Naive thymus-derived CD4-positive, alpha-beta T cell (primary cell): ENCODE measurements at regions of chr3 and their contacts with region 1.

Region 1: GRCh38 chr3:187738331-187739093 is 6.8 kb downstream of the BCL6 start:
- DNase-seq: peak in 8 of 9 donors; percentile 39 to 70 (median 66)
- ATAC-seq: peak; percentile 60
- H3K4me3 ChIP-seq: peak overlapping the region; percentile 79
- H3K4me3 Mint-ChIP-seq: peak overlapping the region; percentile 86 to 100 (median 98)
- H3K27ac ChIP-seq: peak overlapping the region; percentile 72
- H3K27ac Mint-ChIP-seq: peak overlapping the region; percentile 83 to 100 (median 100)
- H3K4me1 ChIP-seq: peaks cover 12 to 23% of the 10 kb centered on the region in 2 donors
- H3K4me1 Mint-ChIP-seq: peaks cover 27 to 63% (median 43%) of the 10 kb centered on the region in 7 donors
- H3K27me3 ChIP-seq: no peaks in the 10 kb centered on the region
- H3K27me3 Mint-ChIP-seq: peaks cover 0 to 3% (median 0%) of the 10 kb centered on the region in 5 donors

Region 2: DNA sequence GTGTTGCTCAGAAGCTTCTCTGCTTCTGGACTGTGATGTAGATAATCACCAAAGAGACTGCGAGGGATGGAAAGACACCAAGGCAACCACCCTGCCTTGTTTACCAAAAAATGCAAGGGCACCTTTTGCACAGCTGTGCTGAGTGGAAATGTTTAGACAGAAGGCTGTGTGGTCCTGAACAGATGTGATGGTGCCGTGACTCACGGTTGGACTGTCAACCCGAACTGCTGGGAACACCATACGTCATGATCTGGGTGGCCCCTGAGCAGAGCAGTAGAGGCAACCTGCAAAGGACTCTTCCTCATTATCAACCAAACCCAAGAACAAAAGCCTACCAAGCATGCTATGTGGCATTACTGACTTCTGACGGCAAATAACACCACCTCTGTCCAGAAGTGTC is 354.1 kb after region 1 on chr3:
- CTCF ChIA-PET with region 1: no interaction called
- POLR2A ChIA-PET with region 1: no interaction called
- intact Hi-C with region 1: no loop called
- DNase-seq: peak in 1 of 9 donors; percentile 31
- ATAC-seq: no peak
- H3K4me3 ChIP-seq: no peak overlapping the region
- H3K4me3 Mint-ChIP-seq: no peak overlapping the region
- H3K27ac ChIP-seq: no peak overlapping the region
- H3K27ac Mint-ChIP-seq: no peak overlapping the region
- H3K4me1 ChIP-seq: no peaks in the 10 kb centered on the region
- H3K4me1 Mint-ChIP-seq: peaks cover 0 to 9% (median 0%) of the 10 kb centered on the region in 7 donors
- H3K27me3 ChIP-seq: no peaks in the 10 kb centered on the region
- H3K27me3 Mint-ChIP-seq: no peaks in the 10 kb centered on the region

Region 3: GRCh38 chr3:188279502-188280335 is 541.2 kb after region 1 on chr3:
- CTCF ChIA-PET with region 1: interaction called, 8 read pairs
- POLR2A ChIA-PET with region 1: no interaction called
- intact Hi-C with region 1: loop called (anchors 1 kb)
- DNase-seq: no peak
- ATAC-seq: no peak
- H3K4me3 ChIP-seq: no peak overlapping the region
- H3K4me3 Mint-ChIP-seq: no peak overlapping the region
- H3K27ac ChIP-seq: no peak overlapping the region
- H3K27ac Mint-ChIP-seq: peak overlapping the region in 1 of 9 donors; percentile 17
- H3K4me1 ChIP-seq: peaks cover 7% of the 10 kb centered on the region in 2 donors
- H3K4me1 Mint-ChIP-seq: peaks cover 14 to 36% (median 23%) of the 10 kb centered on the region in 7 donors
- H3K27me3 ChIP-seq: no peaks in the 10 kb centered on the region
- H3K27me3 Mint-ChIP-seq: no peaks in the 10 kb centered on the region

Region 4: GRCh38 chr3:188400494-188401243 is 662.2 kb after region 1 on chr3:
- CTCF ChIA-PET with region 1: interaction called, 3 read pairs
- POLR2A ChIA-PET with region 1: no interaction called
- intact Hi-C with region 1: loop called (anchors 1 kb)
- DNase-seq: no peak
- ATAC-seq: peak; percentile 75
- H3K4me3 ChIP-seq: no peak overlapping the region
- H3K4me3 Mint-ChIP-seq: peak overlapping the region in 1 of 10 donors; percentile 42
- H3K27ac ChIP-seq: no peak overlapping the region
- H3K27ac Mint-ChIP-seq: peak overlapping the region in 2 of 9 donors; percentile 58 to 69
- H3K4me1 ChIP-seq: peaks cover 0 to 4% of the 10 kb centered on the region in 2 donors
- H3K4me1 Mint-ChIP-seq: peaks cover 28 to 63% (median 49%) of the 10 kb centered on the region in 7 donors
- H3K27me3 ChIP-seq: no peaks in the 10 kb centered on the region
- H3K27me3 Mint-ChIP-seq: no peaks in the 10 kb centered on the region

Region 5: DNA sequence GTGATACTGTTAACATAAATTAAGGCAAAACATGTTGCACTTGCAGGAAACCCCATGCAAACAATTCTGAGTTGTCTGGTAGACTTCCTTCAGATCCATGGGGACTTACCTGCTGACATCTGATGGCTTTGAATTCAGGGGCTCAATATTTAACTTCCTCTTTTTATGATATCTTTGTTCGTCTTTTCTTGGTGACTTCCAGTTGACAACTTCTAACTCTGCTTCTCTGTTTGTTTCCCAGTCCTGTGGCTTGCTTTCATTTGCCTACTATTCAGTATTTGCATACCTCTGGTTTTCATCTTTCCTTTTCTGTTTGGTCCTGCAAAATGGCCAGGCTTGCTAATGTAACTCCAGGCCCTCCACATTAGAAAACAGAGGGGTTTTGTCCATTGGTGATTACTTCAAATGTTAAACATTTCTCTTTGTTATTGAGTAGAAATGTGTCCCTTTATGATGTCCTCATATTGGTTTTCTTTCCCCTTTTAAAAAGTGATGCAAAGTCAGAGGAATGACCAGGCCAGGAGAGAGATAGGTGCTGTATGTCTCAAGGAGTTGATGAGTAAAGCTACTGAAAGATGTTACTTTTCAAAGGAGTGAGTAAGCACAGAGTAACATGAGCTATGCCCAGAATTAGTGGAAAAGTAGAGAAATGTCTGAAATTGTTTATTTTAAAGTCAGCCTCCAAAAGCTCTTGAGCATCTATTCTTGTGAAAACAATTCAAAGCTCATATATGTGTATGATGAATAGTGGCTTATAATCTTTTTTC is 751.3 kb after region 1 on chr3:
- CTCF ChIA-PET with region 1: no interaction called
- POLR2A ChIA-PET with region 1: no interaction called
- intact Hi-C with region 1: no loop called
- DNase-seq: no peak
- ATAC-seq: no peak
- H3K4me3 ChIP-seq: no peak overlapping the region
- H3K4me3 Mint-ChIP-seq: no peak overlapping the region
- H3K27ac ChIP-seq: no peak overlapping the region
- H3K27ac Mint-ChIP-seq: peak overlapping the region in 1 of 9 donors; percentile 12
- H3K4me1 ChIP-seq: no peaks in the 10 kb centered on the region
- H3K4me1 Mint-ChIP-seq: peaks cover 0 to 5% (median 0%) of the 10 kb centered on the region in 7 donors
- H3K27me3 ChIP-seq: no peaks in the 10 kb centered on the region
- H3K27me3 Mint-ChIP-seq: no peaks in the 10 kb centered on the region

Region 6: DNA sequence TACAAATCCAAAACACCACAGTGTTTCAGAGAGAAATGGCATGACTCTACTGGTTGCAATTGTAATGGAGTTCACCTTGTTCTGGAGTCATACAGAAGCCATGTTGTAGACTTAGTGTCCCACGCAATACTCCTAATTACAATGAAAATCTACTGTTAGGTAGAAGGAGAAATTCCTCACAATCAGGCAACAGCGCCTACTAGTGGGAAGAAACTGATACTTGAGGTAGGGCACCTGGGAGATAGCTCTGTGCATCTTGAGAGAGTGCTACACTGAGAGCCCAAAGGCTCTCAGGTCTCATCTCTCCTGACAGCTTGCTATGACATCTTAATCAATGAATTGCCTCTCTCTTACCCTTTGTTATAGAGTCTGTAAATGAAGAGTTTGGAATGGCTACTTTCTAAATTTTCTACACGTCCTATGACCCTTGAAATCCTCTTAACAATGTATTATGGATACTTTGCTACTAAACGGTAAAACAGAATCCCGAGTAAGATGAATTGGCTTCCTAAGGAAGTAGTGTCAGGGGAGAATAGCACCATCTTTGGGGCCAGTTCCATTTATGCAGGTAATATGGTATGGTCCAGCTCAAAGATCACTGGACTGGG is 1010.6 kb after region 1 on chr3:
- CTCF ChIA-PET with region 1: interaction called, 52 read pairs
- POLR2A ChIA-PET with region 1: no interaction called
- intact Hi-C with region 1: loop called (anchors 1 kb)
- DNase-seq: peak in 8 of 9 donors; percentile 25 to 62 (median 46)
- ATAC-seq: peak; percentile 82
- H3K4me3 ChIP-seq: no peak overlapping the region
- H3K4me3 Mint-ChIP-seq: no peak overlapping the region
- H3K27ac ChIP-seq: no peak overlapping the region
- H3K27ac Mint-ChIP-seq: no peak overlapping the region
- H3K4me1 ChIP-seq: no peaks in the 10 kb centered on the region
- H3K4me1 Mint-ChIP-seq: peaks cover 0 to 17% (median 0%) of the 10 kb centered on the region in 7 donors
- H3K27me3 ChIP-seq: no peaks in the 10 kb centered on the region
- H3K27me3 Mint-ChIP-seq: no peaks in the 10 kb centered on the region

Region 7: DNA sequence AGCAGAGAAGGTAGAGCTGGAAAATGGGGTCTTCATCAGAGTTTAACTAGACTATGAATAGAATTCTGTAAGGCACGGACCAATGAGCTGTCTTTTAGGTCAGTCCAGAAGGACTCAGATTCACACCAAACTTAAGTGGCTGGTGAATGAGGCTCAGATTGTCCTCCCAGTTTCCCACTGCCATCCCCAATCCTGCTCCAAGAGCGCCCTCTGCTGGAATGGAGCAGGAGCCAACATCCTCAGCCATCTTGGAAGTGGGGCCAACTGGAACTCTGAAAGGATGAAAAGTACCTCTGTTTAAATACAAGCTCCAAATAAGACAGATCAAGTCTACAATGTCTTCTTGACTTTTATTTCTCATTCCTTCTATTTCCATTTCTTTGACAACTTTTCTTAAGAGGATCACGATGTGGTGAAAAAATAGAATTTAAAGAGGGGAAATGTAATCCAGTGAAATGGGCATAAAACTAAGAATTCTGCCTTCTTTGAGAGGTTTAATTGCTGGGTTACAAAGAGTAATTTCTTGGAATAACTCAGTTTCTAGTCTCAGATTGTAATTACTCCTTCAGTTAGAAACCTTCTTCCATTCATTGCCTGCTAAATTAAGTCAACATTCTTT is 1216.2 kb after region 1 on chr3:
- CTCF ChIA-PET with region 1: interaction called, 322 read pairs
- POLR2A ChIA-PET with region 1: interaction called, 33 read pairs
- intact Hi-C with region 1: loop called (anchors 1 kb)
- DNase-seq: peak; percentile 35 to 80 (median 63)
- ATAC-seq: peak; percentile 83
- H3K4me3 ChIP-seq: no peak overlapping the region
- H3K4me3 Mint-ChIP-seq: no peak overlapping the region
- H3K27ac ChIP-seq: no peak overlapping the region
- H3K27ac Mint-ChIP-seq: no peak overlapping the region
- H3K4me1 ChIP-seq: no peaks in the 10 kb centered on the region
- H3K4me1 Mint-ChIP-seq: peaks cover 0 to 30% (median 0%) of the 10 kb centered on the region in 7 donors
- H3K27me3 ChIP-seq: no peaks in the 10 kb centered on the region
- H3K27me3 Mint-ChIP-seq: peaks cover 0 to 5% (median 0%) of the 10 kb centered on the region in 5 donors

Region 8: DNA sequence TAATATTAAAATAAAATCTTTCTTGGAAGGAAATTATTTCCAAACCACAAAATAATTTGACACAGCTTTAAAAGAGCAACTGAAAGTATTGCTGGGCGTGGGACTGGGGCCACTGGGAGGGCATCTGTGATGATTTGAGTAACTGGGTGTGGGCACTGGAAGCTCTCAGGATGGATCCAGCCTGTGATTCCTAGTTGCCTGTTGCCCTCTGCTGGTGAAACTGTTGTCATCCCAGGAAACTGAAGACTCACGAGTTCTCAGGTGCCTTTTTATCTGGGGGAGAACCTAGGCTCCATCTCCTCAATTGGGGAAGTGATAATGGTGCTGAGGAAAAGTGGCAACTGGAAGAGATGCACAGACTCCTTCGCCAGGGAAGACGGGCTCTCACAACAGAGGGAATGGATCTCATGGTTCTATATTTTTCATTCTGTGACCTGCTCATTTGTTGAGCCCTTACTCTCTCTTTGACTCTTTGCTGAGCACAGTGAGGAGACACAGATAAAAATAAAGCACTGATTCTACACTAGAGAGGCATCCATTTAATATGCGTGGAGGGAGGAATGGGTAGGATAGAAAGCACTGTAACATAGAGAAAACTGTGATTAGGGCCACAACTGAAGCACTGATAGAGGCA is 1494.8 kb after region 1 on chr3:
- CTCF ChIA-PET with region 1: no interaction called
- POLR2A ChIA-PET with region 1: no interaction called
- intact Hi-C with region 1: loop called in 1 of 2 experiments (anchors 2 kb)
- DNase-seq: no peak
- ATAC-seq: no peak
- H3K4me3 ChIP-seq: no peak overlapping the region
- H3K4me3 Mint-ChIP-seq: no peak overlapping the region
- H3K27ac ChIP-seq: no peak overlapping the region
- H3K27ac Mint-ChIP-seq: no peak overlapping the region
- H3K4me1 ChIP-seq: no peaks in the 10 kb centered on the region
- H3K4me1 Mint-ChIP-seq: peaks cover 0 to 10% (median 4%) of the 10 kb centered on the region in 7 donors
- H3K27me3 ChIP-seq: no peaks in the 10 kb centered on the region
- H3K27me3 Mint-ChIP-seq: peaks cover 0 to 14% (median 0%) of the 10 kb centered on the region in 5 donors